Heart left ventricle (tissue), 16 donors: ENCODE measurements at regions of chr14 and their contacts with region 1.

Region 1: GRCh38 chr14:70955543-70956480 is 48.6 kb downstream of the PCNX1 start:
- DNase-seq: no peak
- ATAC-seq: peak in 3 of 4 donors; percentile 49 to 55 (median 54)
- H3K4me3 ChIP-seq: no peak overlapping the region
- H3K27ac ChIP-seq: no peak overlapping the region
- H3K4me1 ChIP-seq: peaks cover 0 to 47% (median 24%) of the 10 kb centered on the region in 12 donors
- H3K27me3 ChIP-seq: no peaks in the 10 kb centered on the region
- CTCF ChIP-seq: peak in 11 of 12 donors; percentile 34 to 67 (median 54)
- POLR2A ChIP-seq: no peak

Region 2: GRCh38 chr14:70907176-70907995 is 48.4 kb before region 1 on chr14 and contains the start of gene PCNX1:
- intact Hi-C with region 1: loop called in 6 of 10 experiments (anchors 2 to 5 kb)
- DNase-seq: peak; percentile 90 to 94 (median 91)
- ATAC-seq: peak; percentile 82 to 91 (median 86)
- H3K4me3 ChIP-seq: peak within 1 kb of the TSS; percentile 78 to 99 (median 94)
- H3K27ac ChIP-seq: peak within 1 kb of the TSS; percentile 80 to 98 (median 94)
- H3K4me1 ChIP-seq: peaks cover 0 to 66% (median 50%) of the 10 kb centered on the region in 12 donors
- H3K27me3 ChIP-seq: no peaks in the 10 kb centered on the region
- CTCF ChIP-seq: peak; percentile 73 to 97 (median 89)
- POLR2A ChIP-seq: peak in 1 of 2 donors; percentile 37
- total RNA-seq, gene PCNX1: 36.3 to 64.7 (median 53.4) TPM

Region 3: DNA sequence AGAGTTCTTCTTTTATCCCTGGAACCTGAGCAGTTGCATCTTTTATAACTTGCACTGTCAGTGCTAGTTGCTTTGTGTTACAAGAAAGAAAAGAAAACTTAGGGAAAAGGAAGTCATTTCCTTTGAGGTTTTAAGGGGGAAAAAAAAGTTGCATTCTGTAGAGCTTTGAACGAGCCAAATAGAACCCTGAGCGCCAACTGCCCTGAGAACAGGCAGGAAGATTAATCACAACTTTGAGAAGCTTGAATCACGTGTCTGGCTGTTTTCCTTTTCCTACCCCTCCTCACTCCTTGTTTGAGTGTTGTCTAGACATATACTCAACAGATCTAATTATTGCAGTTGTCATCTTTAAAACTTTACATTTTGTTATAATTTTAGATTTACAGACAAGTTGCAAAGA is 36.0 kb before region 1 on chr14:
- intact Hi-C with region 1: loop called in 1 of 10 experiments (anchors 5 kb)
- DNase-seq: peak in 1 of 5 donors; percentile 24
- ATAC-seq: peak in 3 of 4 donors; percentile 43 to 52 (median 47)
- H3K4me3 ChIP-seq: no peak overlapping the region
- H3K27ac ChIP-seq: peak overlapping the region in 2 of 12 donors; percentile 2 to 9
- H3K4me1 ChIP-seq: peaks cover 0 to 79% (median 25%) of the 10 kb centered on the region in 12 donors
- H3K27me3 ChIP-seq: no peaks in the 10 kb centered on the region
- CTCF ChIP-seq: no peak
- POLR2A ChIP-seq: no peak